Naive thymus-derived CD4-positive, alpha-beta T cell (primary cell): ENCODE measurements at regions of chr7 and their contacts with region 1.

Region 1: GRCh38 chr7:116211006-116211912 is 920 bp downstream of the TES start:
- DNase-seq: peak; percentile 54 to 89 (median 84)
- ATAC-seq: peak; percentile 87
- H3K4me3 ChIP-seq: peak overlapping the region; percentile 92
- H3K4me3 Mint-ChIP-seq: peak overlapping the region; percentile 84 to 99 (median 98)
- H3K27ac ChIP-seq: peak overlapping the region; percentile 93
- H3K27ac Mint-ChIP-seq: peak overlapping the region; percentile 94 to 99 (median 97)
- H3K4me1 ChIP-seq: peaks cover 28 to 42% of the 10 kb centered on the region in 2 donors
- H3K4me1 Mint-ChIP-seq: peaks cover 43 to 71% (median 59%) of the 10 kb centered on the region in 7 donors
- H3K27me3 ChIP-seq: no peaks in the 10 kb centered on the region
- H3K27me3 Mint-ChIP-seq: no peaks in the 10 kb centered on the region

Region 2: DNA sequence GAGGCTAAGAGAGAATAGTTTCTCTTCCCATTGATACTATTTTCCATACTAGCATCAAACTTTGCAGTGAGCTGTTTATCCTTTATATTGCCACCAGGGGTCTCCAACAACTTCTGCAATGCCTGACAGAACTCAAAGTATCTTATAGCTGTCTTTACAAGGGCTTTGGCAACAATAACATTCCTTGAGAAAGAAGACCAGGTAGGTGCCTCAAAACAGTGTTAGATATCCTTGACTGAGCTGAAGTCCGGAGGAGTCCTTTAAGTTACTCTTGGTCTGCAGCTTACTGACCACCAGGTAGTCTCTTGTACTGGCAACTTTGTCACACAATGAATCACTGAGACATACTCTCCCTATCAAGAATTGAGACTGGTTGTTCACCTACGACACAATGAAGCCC is 31.0 kb before region 1 on chr7:
- CTCF ChIA-PET with region 1: interaction called, 42 read pairs
- POLR2A ChIA-PET with region 1: interaction called, 19 read pairs
- intact Hi-C with region 1: loop called (anchors 1 kb)
- DNase-seq: peak in 7 of 9 donors; percentile 47 to 73 (median 61)
- ATAC-seq: peak; percentile 84
- H3K4me3 ChIP-seq: no peak overlapping the region
- H3K4me3 Mint-ChIP-seq: no peak overlapping the region
- H3K27ac ChIP-seq: no peak overlapping the region
- H3K27ac Mint-ChIP-seq: peak overlapping the region in 1 of 9 donors; percentile 36
- H3K4me1 ChIP-seq: peaks cover 0 to 3% of the 10 kb centered on the region in 2 donors
- H3K4me1 Mint-ChIP-seq: peaks cover 0 to 12% (median 2%) of the 10 kb centered on the region in 7 donors
- H3K27me3 ChIP-seq: no peaks in the 10 kb centered on the region
- H3K27me3 Mint-ChIP-seq: peaks cover 0 to 15% (median 0%) of the 10 kb centered on the region in 5 donors

Region 3: DNA sequence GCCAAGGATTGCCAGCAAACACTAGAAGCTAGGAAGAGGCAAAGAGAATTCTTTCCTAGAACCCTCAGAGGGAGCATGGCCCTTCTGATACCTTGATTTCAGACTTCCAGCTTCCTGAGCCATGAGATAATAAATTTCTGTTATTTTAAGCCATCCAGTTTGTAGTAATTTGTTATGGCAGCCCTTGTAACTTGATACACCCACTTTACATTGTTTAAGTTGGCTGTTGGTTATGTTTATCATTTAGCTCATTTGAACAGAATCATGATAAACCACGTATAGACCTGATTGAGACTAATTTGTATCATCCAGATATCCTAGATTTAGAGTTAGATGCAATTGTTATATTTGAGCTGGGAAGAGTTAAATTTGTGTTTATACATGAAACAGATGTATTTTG is 10.3 kb before region 1 on chr7:
- CTCF ChIA-PET with region 1: interaction called, 13 read pairs
- POLR2A ChIA-PET with region 1: interaction called, 42 read pairs
- intact Hi-C with region 1: no loop called
- DNase-seq: no peak
- ATAC-seq: no peak
- H3K4me3 ChIP-seq: no peak overlapping the region
- H3K4me3 Mint-ChIP-seq: no peak overlapping the region
- H3K27ac ChIP-seq: no peak overlapping the region
- H3K27ac Mint-ChIP-seq: no peak overlapping the region
- H3K4me1 ChIP-seq: no peaks in the 10 kb centered on the region
- H3K4me1 Mint-ChIP-seq: peaks cover 0 to 2% (median 0%) of the 10 kb centered on the region in 7 donors
- H3K27me3 ChIP-seq: no peaks in the 10 kb centered on the region
- H3K27me3 Mint-ChIP-seq: peaks cover 0 to 52% (median 0%) of the 10 kb centered on the region in 5 donors

Region 4: DNA sequence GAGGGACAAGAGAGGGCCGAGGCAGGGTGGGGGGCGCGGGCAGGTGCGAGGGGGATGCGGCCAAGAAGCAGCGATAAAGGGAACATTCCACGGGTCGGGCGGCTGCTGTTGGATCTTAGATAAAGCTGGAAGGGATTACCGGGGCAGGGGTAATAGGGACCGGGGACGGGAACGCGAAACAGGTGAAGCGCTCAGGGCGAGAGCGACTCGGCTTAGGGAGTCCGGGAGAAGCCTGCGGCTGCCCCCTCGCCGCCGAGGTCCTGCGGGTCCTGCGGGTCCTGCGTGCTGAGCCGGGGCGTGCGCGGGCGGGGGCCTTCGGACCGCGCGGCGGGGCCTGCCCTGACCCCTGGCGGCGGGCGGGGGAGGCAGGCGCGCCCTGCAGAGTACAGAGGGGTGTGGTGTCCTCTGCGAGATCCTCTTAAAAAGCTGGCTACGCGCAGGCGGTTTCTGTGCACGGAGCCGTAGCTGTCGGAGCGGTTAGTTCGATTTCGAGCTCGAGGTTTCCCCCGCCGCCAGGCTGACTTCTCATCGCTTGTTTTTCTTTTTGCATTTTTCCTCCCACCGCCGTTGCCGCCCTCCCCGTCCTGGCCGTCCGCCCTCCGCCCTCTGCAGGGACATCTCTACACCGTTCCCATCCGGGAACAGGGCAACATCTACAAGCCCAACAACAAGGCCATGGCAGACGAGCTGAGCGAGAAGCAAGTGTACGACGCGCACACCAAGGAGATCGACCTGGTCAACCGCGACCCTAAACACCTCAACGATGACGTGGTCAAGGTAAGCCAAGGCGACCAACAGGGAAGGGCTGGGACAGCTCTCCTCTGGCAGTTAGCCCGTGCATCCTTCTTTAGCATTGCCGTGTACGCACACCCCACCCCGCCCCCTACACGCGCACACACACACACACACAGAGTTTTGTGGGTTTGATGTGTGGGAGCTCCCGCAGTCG is 314.9 kb after region 1 on chr7:
- CTCF ChIA-PET with region 1: no interaction called
- POLR2A ChIA-PET with region 1: no interaction called
- intact Hi-C with region 1: loop called in 1 of 2 experiments (anchors 1 kb)
- DNase-seq: peak; percentile 21 to 73 (median 52)
- ATAC-seq: peak; percentile 93
- H3K4me3 ChIP-seq: peak overlapping the region; percentile 48
- H3K4me3 Mint-ChIP-seq: peak overlapping the region; percentile 76 to 89 (median 83)
- H3K27ac ChIP-seq: no peak overlapping the region
- H3K27ac Mint-ChIP-seq: peak overlapping the region in 1 of 9 donors; percentile 32
- H3K4me1 ChIP-seq: peaks cover 9 to 14% of the 10 kb centered on the region in 2 donors
- H3K4me1 Mint-ChIP-seq: peaks cover 8 to 22% (median 21%) of the 10 kb centered on the region in 7 donors
- H3K27me3 ChIP-seq: peaks cover 19 to 22% of the 10 kb centered on the region in 2 donors
- H3K27me3 Mint-ChIP-seq: peaks cover 70 to 85% (median 77%) of the 10 kb centered on the region in 5 donors

Region 5: DNA sequence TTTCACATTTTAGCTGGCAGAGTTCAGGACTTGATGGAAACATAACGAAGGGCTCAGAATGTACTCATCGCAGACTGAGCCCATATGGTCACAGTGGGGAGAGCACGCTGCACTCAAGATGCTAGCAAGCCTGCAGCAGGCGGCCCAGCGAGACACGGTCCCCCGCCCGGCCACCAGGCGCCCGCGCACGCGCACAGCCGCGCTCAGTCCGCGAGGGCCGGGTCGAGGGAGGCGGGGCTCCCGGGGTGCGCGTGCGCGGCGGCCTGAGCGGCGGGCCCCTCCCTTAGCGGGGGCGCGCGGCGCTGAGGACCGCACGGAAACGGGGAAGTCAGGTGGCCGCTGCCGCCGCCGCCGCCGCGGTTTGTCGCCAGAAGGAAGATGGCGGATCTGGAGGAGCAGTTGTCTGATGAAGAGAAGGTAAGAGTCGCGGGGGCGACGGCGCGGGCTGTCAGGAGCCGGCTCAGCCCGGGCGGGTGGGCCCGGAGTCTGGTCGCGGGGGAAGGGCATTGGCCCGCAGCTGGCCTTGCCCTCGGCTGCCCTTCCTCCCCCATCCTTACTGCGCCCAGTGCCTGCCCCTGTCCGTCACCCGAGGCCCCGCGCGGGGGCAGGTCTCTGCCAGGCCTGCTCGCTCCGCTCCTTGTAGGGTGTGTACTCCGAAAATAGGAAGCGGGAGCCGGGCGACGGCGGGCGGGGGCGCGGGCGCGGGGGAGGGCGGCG is 651.1 kb after region 1 on chr7 and contains the start of gene CAPZA2:
- CTCF ChIA-PET with region 1: no interaction called
- POLR2A ChIA-PET with region 1: no interaction called
- intact Hi-C with region 1: loop called (anchors 1 to 2 kb)
- DNase-seq: peak; percentile 89 to 99 (median 96)
- ATAC-seq: peak; percentile 96
- H3K4me3 ChIP-seq: peak within 1 kb of the TSS; percentile 73
- H3K4me3 Mint-ChIP-seq: peak within 1 kb of the TSS; percentile 94 to 99 (median 97)
- H3K27ac ChIP-seq: peak within 1 kb of the TSS; percentile 91
- H3K27ac Mint-ChIP-seq: peak within 1 kb of the TSS; percentile 91 to 99 (median 96)
- H3K4me1 ChIP-seq: peaks cover 11 to 28% of the 10 kb centered on the region in 2 donors
- H3K4me1 Mint-ChIP-seq: peaks cover 29 to 49% (median 46%) of the 10 kb centered on the region in 7 donors
- H3K27me3 ChIP-seq: no peaks in the 10 kb centered on the region
- H3K27me3 Mint-ChIP-seq: peaks cover 4 to 26% (median 8%) of the 10 kb centered on the region in 5 donors
- total RNA-seq, gene CAPZA2: 86.2 to 129 (median 111) TPM

Region 6: DNA sequence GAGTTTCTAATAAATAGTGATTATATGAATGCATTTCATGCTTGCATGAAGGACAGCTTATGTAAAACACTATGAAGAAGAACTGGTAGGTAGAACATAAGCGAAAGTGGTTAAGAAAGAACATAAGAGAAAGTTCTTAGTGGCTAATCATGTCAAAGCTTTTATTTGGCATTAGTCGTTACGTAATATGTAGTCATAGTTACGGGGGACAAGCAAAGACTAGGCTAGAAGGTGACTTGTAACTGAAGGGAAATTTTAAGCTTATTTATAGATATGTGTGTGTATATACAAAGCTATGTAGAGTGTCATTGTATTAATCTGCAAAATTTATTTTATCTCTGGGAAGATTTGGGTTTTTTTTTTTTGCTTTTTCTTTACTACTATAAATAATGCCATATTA is 688.0 kb after region 1 on chr7:
- CTCF ChIA-PET with region 1: no interaction called
- POLR2A ChIA-PET with region 1: no interaction called
- intact Hi-C with region 1: no loop called
- DNase-seq: no peak
- ATAC-seq: no peak
- H3K4me3 ChIP-seq: no peak overlapping the region
- H3K4me3 Mint-ChIP-seq: no peak overlapping the region
- H3K27ac ChIP-seq: no peak overlapping the region
- H3K27ac Mint-ChIP-seq: peak overlapping the region in 1 of 9 donors; percentile 9
- H3K4me1 ChIP-seq: no peaks in the 10 kb centered on the region
- H3K4me1 Mint-ChIP-seq: peaks cover 0 to 23% (median 13%) of the 10 kb centered on the region in 7 donors
- H3K27me3 ChIP-seq: no peaks in the 10 kb centered on the region
- H3K27me3 Mint-ChIP-seq: no peaks in the 10 kb centered on the region

Region 7: GRCh38 chr7:117008883-117009531 is 797.7 kb after region 1 on chr7:
- CTCF ChIA-PET with region 1: no interaction called
- POLR2A ChIA-PET with region 1: interaction called, 3 read pairs
- intact Hi-C with region 1: loop called in 1 of 2 experiments (anchors 1 kb)
- DNase-seq: peak in 8 of 9 donors; percentile 40 to 66 (median 58)
- ATAC-seq: peak; percentile 74
- H3K4me3 ChIP-seq: no peak overlapping the region
- H3K4me3 Mint-ChIP-seq: peak overlapping the region; percentile 39 to 81 (median 71)
- H3K27ac ChIP-seq: no peak overlapping the region
- H3K27ac Mint-ChIP-seq: peak overlapping the region in 5 of 9 donors; percentile 46 to 74 (median 63)
- H3K4me1 ChIP-seq: peaks cover 19 to 54% of the 10 kb centered on the region in 2 donors
- H3K4me1 Mint-ChIP-seq: peaks cover 44 to 77% (median 66%) of the 10 kb centered on the region in 7 donors
- H3K27me3 ChIP-seq: no peaks in the 10 kb centered on the region
- H3K27me3 Mint-ChIP-seq: peaks cover 0 to 57% (median 0%) of the 10 kb centered on the region in 5 donors